Activated T-helper 1 cell treated with anti-CD3 and anti-CD28 coated beads, Interleukin-12 subunit alpha, Interleukin-12 subunit beta, Interleukin-2, Interleukin-4 antibody, amounts not matched to agents 30 ng/mL and 10 ng/mL and 1 ng/mL, durations not matched to agents 14 hours and 24 hours and 36 hours (primary cell): ENCODE measurements at regions of chr3 and their contacts with region 1.

Region 1: GRCh38 chr3:126522363-126522788 is 1.6 kb upstream of the CHST13 start:
- DNase-seq: peak; percentile 11
- H3K4me3 Mint-ChIP-seq: no peak overlapping the region
- H3K27ac Mint-ChIP-seq: no peak overlapping the region
- H3K4me1 Mint-ChIP-seq: no peaks in the 10 kb centered on the region
- H3K27me3 Mint-ChIP-seq: peaks cover 33% of the 10 kb centered on the region

Region 2: DNA sequence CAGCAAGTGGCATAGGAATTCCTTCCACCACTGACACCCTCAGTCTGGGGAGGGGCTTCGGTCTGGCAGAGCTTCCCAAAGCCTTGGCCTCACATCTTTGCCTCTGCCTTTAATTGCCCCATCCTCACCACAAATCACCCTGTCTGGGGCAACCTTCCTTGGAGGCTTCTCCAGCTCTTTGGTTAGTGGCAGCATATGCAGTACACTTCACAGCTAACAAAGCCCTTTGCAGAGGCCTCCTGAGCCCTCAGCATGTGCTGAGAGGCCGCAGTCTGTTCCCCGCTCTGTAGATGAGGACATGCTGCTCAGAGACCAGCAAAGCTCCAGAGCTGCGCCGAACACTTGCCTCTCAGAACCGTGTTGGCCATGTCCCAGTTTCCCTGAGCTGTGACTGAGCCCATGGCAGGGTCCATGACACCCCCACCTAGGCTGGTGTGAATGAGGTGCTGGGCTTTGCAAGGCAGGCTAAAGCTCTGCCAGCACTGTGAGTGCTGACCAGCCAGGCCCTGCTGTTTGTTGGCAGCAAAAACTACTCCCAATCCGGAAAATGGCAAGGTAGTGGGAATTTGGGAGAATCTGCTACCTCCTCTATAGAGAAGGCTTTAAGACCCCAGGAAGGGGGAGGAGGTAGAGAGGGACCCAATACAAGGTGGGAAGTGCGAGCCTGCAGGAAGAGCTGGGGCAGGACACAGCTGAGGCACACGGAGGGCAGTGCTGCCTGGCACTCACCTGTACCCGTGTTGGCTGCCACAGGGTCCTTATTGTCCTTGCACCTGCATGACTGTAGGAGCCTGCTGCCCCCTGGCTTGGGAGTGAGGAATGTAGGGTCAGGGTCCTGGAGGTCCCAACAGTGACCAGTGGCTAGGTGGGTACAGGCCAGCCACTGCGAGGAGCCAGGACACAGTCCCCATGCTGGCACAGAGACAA is 156.8 kb before region 1 on chr3:
- intact Hi-C with region 1: no loop called
- DNase-seq: no peak
- H3K4me3 Mint-ChIP-seq: no peak overlapping the region
- H3K27ac Mint-ChIP-seq: no peak overlapping the region
- H3K4me1 Mint-ChIP-seq: no peaks in the 10 kb centered on the region
- H3K27me3 Mint-ChIP-seq: peaks cover 3% of the 10 kb centered on the region

Region 3: DNA sequence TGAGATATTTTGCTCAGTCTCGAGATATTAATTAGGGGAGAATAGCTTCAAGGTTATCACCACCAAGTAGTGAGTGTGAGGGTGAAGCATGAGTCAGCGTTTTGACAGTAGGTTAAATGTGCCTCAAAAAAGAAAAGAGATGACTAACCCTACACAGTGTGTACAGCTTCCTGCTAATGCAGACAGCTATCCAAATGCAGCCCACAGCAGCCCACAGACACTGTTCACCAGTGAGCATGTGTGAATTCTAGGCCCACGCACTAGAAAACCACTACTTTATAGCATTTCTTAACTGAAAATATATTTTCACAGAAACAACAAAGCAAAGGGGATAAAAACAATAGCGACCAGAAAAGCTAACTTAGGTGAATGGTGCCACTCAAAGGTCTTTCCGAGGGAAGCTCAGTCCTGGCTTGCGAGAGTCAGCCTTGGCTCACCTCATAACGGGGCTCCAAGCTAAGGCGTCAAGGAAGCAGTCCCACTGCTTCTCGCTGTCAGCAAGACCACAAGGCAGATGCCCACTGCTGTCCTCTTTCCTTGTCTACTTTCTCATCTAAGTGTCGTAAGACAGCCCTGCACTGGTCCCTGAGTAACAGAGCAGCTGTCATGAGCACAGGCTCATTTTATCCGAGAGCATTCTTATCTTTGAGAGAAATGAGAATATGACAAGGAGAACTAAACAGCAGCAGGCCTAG is 85.0 kb after region 1 on chr3:
- intact Hi-C with region 1: loop called (anchors 1 kb)
- DNase-seq: peak; percentile 6
- H3K4me3 Mint-ChIP-seq: no peak overlapping the region
- H3K27ac Mint-ChIP-seq: no peak overlapping the region
- H3K4me1 Mint-ChIP-seq: peaks cover 10% of the 10 kb centered on the region
- H3K27me3 Mint-ChIP-seq: peaks cover 2% of the 10 kb centered on the region

Region 4: DNA sequence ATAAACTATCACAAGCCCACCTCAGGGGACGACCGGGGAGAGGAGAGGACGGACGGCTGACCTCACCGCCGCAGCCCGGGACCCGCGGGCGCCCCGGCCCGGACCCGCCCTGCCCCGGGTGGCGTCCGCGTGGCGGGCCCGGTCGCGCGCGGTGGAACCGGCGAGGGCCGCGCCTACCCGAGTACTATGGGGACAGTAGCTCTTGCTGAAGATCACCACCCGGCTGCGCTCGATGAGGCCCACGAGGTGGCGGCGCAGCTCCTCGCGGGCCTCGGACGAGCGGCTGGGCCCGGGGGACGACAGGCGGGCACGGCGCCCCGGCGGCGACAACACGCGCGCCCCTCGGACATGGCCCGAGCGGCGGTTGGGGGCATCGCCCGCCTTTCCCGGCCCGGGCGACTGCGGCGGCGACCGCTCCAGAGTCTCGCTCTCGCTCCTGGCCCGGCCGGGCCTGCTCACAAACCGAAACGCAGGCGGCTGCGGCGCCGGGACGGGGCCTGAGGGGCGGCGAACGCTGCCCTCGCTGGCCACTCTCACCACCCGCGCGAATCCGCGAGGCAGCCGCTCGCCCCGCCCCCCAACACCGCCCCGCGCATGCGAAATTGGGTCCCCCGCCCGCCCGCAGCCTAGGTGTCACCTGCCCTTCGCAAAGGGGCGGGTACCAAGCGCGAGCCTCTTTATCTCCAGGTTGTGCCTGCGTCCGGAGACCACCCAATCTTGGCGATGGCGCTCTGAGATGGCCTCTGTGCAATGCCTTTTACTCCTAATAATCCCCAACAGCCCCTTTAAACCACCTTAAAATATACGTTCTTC is 132.4 kb after region 1 on chr3 and contains the start of gene TXNRD3:
- intact Hi-C with region 1: loop called (anchors 2 kb)
- DNase-seq: peak; percentile 48
- H3K4me3 Mint-ChIP-seq: peak within 1 kb of the TSS; percentile 75
- H3K27ac Mint-ChIP-seq: no peak within 1 kb of the TSS
- H3K4me1 Mint-ChIP-seq: no peaks in the 10 kb centered on the region
- H3K27me3 Mint-ChIP-seq: peaks cover 24% of the 10 kb centered on the region
- total RNA-seq, gene TXNRD3: 0.78 and 1.4 TPM in 2 replicates

Region 5: DNA sequence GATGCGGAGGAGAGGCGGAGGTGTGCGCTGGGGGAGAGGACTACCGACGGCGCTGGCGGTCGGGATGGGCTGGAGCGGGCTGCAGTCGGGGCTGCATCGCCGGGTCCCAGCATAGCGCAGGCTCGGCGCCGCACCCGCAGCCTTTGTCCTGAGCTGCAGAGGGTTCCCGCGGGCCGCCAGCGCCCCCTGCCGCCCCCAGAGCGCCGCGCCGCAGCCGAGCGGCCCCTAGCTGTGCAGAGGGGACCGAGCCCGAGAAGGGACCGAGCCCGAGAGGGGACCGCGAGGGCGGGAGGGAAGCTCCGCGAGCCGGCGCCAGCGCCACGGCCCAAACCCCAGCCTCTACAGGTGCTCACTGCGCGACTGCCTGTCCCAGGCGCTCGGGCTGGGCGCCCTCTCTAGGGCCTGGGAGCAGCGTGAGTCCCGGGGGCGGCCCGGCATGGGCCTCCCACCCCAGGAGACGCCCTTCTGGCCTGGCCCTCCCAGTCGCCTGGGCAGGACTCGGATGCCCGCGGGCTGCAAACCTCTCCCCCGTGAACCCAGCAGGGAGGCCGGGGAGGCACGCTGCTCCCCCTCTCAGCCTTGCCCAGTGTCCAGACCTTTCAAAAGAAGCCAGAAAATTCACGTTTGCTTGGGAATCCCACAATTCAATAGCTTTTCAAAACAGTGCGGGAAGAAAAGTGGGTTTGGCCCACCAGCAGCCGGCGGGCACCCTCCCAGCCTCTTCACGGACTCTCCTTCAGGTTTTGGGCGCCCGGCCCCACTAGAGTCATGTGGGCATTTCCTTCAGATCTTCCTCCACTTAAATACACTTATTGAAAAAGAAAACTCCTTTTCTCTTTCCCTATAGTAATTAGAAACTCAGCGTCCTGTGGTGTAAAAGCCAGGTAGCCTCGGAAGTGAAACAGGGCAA is 933.4 kb after region 1 on chr3:
- intact Hi-C with region 1: loop called (anchors 2 kb)
- DNase-seq: peak; percentile 31
- H3K4me3 Mint-ChIP-seq: no peak overlapping the region
- H3K27ac Mint-ChIP-seq: no peak overlapping the region
- H3K4me1 Mint-ChIP-seq: peaks cover 4% of the 10 kb centered on the region
- H3K27me3 Mint-ChIP-seq: peaks cover 48% of the 10 kb centered on the region